GM18951 (cell line): ENCODE measurements at regions of chr3 and their contacts with region 1.

Region 1: DNA sequence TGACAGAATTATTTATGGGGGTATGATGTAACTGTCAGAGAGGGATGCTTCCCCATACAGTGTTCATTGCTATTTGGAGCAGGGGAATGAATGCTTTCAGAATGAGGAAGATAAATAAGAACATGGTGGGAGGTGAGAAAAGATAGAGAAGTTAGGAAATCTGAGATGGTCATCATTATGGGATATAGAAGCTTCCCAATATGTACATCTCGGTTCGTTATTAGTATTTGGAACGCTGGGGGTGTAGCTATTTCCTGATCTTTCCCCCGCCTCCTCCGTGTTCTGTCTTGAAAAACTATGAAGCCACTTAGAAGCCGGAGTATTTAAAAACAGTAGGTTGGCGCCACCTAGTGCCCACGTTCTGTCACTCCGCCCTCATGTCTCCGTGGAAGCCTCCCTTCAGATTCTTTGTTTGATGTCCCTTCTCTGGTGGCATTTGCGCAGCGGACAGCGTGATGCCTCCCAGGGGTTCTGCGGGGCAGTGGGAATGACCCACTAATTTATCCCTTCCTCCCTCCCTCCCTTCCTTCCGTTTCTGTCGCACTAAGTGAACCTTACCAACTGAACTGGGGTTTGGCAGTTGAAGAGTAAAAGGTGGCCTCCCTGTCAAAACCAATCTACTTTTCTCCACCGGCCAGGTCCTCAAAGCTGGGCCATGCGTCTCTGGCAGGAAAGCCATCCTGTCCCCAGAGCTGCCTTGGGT is 184.5 kb downstream of the FEZF2 start:
- POLR2A ChIP-seq: no peak

Region 2: DNA sequence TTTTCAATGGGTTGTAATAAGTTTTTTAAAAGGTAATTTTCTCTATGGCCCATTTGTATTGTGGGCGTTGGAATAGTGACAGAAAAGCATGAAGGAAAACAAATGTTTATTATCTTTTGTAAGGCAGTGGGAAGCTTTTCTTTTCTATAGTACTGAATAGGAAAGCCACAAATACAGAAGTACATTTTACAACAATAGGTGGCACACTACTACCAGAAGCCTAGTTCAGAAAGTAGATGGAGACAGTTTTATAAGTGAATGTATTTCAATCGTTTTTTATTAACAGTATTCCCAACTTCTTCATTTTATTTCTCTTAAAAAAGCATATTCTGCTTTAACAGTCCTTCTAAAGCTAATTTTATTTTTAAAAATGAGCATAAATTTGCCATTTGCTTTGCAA is 330.8 kb before region 1 on chr3:
- in situ Hi-C with region 1: loop called (anchors 25 kb)
- POLR2A ChIP-seq: no peak